SK-N-SH (cell line): ENCODE measurements at regions of chr4 and their contacts with region 1.

Region 1: DNA sequence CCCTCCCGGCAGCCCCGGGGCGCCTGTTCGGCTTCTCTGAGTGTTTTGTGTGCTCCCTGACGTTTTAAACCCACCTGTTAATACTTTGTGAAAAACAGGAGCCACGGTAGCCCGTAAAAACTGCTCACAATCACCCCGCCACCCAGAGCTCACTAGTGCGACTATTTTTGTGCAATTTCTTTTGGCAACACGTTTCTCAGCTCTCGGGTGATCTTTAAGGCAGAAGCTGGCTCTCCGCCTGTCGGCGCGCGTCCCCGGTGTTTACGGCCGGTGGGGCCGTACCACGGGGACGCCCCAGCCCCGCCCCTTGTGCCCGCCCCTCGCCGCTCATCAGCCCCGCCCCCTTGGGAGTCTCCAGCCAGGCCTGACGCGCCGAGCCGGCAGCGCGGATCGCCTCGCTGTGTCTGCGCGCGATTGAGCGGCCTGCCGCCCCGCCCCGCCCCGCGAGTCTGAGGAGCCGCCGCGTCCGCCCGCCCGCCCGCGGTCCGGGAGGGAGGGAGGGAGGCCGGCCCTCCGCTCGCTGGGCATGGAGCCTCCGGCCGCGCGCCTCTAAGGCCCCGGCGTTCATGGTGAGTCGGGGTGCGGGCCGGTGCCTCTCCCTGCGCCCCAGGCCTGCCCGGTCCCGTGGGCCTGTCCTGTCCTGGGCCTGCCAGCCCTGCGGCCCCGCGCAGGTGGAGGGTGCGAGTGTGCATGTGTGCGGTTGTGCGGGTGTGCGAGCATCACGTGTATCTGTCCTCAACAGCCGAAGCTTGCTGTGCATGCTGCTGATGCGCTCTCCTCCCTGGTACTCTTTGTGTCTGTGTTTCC is 56.2 kb upstream of the TADA2B start:
- DNase-seq: peak; percentile 99
- H3K4me3 ChIP-seq: peak overlapping the region; percentile 76 to 96
- H3K27ac ChIP-seq: peak overlapping the region; percentile 88 to 89
- H3K4me1 ChIP-seq: peaks cover 25 to 51% of the 10 kb centered on the region in 2 experiments
- H3K27me3 ChIP-seq: no peaks in the 10 kb centered on the region
- CTCF ChIP-seq: no peak
- EP300 ChIP-seq: no peak
- RAD21 ChIP-seq: peak; percentile 26; the same call in 1 of the 2 replicates

Region 2: DNA sequence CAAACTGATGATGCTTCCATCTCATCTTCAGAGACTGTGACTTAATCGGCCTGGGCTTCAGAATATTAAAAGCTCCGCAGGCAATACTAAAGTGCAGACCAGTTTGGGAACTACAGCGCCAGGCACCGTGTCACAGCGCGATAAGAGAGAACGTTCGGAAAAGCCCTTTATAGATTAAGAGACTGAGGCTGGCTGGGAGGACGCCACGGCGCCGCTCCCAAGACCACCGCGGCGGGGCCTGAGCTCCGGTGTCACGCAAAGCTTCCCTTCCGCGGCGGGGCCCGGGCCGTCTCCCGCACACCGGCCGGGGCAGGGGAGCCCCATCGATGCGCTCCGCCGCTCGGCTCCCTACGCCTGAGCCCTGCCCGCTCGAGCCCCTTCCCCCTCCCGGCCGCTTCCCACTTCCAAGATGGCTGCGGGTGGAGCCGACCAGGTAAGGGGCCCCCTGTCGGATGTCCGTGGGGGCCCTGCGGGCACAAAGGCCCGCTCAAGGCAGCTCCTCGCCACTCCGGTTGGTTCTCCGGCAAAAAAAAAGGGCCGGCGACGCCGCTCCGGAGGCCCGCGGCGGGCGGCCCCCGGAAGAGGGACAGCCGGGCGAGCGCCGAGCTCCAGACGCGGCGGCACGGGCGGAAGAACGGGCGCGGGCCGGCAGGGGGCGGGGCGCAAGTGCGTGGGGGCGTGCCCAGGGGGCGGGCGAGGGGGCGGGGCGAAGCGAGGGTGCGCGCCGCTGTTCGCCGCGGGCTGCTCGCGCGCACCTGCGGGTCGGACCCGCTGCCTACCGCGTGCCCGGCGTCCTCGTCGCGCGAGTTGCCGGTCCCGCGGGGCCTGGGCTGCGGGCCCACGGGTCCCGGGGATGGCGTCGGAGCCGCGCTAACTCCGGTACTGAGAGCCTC is 77.7 kb before region 1 on chr4 and contains the start of gene TBC1D14:
- CTCF ChIA-PET with region 1: interaction called, 4 read pairs
- POLR2A ChIA-PET with region 1: interaction called, 10 read pairs
- DNase-seq: peak; percentile 98
- H3K4me3 ChIP-seq: peak within 1 kb of the TSS; percentile 83 to 91
- H3K27ac ChIP-seq: peak within 1 kb of the TSS; percentile 93 to 95
- H3K4me1 ChIP-seq: peaks cover 0 to 26% of the 10 kb centered on the region in 2 experiments; a peak in 1 of 4 replicates
- H3K27me3 ChIP-seq: no peaks in the 10 kb centered on the region
- CTCF ChIP-seq: peak; percentile 31
- EP300 ChIP-seq: no peak; a peak in 1 of 4 replicates
- RAD21 ChIP-seq: no peak
- polyA plus RNA-seq, gene TBC1D14: 39.5 and 42.6 TPM in 2 replicates

Region 3: DNA sequence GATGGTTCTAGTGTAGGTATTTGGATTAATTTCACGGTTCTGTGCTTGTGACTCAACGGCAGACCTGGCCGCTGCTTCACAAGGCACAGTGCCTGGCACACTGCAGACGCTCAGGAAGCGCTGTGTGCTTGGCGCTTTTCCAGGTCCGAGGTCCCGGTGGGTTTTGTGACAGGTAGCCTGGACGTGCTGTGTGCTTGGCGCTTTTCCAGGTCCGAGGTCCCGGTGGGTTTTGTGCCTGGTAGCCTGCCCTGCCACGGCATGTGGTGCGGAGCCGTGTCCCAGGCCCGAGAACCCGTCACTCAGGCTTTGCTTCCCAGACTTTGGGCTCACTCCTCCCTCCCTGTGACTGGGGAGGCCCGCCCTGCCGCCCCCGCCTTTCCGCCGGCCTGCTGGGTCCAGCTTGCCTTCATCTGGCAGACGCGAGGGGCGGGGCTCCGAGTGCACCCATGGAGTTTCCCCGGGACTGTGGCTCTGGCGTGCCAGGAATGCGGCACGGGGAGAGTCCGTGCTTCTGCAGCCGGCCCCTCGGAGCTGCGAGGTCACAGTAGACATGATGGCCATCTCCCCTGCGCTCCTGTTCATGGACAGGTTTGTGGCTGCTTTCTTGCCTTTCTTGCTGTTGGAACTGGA is 33.1 kb before region 1 on chr4:
- CTCF ChIA-PET with region 1: no interaction called
- POLR2A ChIA-PET with region 1: no interaction called
- DNase-seq: peak; percentile 61
- H3K4me3 ChIP-seq: no peak overlapping the region
- H3K27ac ChIP-seq: no peak overlapping the region
- H3K4me1 ChIP-seq: peaks cover 0 to 9% of the 10 kb centered on the region in 2 experiments; a peak in 1 of 4 replicates
- H3K27me3 ChIP-seq: no peaks in the 10 kb centered on the region
- CTCF ChIP-seq: no peak
- EP300 ChIP-seq: no peak
- RAD21 ChIP-seq: no peak

Region 4: DNA sequence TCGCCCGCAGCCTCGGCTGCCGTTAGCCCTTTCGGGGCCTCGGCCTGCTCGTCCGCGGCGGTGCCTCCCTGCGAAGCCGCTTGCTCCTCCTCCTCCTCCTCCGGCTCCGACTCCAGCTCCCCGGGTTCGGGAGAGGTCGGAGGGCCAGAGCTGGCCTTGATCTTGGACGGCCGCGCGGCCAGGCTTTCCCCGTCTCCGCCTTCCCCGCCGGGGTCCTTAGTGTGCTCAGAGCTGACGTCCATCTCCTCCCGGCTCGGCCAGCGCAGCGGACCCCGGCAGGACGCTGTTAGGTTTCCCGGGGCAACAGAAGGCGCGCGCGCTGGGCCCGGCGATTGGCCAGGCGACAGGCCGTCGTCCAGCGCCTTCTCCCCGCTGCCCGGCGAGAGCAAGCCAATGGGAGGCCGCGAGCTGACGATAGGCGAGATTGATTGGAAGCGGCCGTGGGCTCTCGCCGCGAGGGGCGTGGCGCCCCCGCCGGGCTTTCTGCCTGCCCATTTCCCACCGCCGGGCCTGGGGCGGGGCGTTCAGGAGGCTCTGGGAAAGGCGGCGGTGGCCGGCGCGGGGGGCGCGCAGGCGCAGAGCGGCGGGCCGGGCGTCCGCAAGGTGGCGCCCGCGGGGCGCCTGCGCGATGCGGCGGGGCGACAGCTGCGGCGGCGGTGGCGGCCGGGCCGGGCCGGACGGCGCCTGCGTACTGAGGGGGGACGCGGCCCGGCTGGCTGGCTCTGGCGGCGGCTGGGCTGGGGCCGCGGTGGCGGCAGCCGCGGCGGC is 55.9 kb after region 1 on chr4 and contains the start of gene TADA2B:
- CTCF ChIA-PET with region 1: interaction called, 12 read pairs
- POLR2A ChIA-PET with region 1: interaction called, 5 read pairs
- DNase-seq: peak; percentile 100
- H3K4me3 ChIP-seq: peak within 1 kb of the TSS; percentile 92 to 96
- H3K27ac ChIP-seq: peak within 1 kb of the TSS; percentile 83 to 88
- H3K4me1 ChIP-seq: peaks cover 15 to 29% of the 10 kb centered on the region in 2 experiments
- H3K27me3 ChIP-seq: no peaks in the 10 kb centered on the region
- CTCF ChIP-seq: peak; percentile 22
- EP300 ChIP-seq: 0 out of 4 replicates have a peak, but pooled peaks of 1 of the 2 experiments have one; percentile 11
- RAD21 ChIP-seq: no peak; the same call in 1 of the 2 replicates
- polyA plus RNA-seq, gene TADA2B: 6.0 and 8.0 TPM in 2 replicates